Activated CD8-positive, alpha-beta T cell treated with anti-CD3 and anti-CD28 coated beads, Interleukin-2, amount 10 ng/mL, durations not matched to agents 7 days and 5 days (primary cell): ENCODE measurements at regions of chr20 and their contacts with region 1.

Region 1: GRCh38 chr20:45095753-45096371 is 5.1 kb downstream of the KCNS1 start:
- DNase-seq: peak; percentile 75
- ATAC-seq: peak; percentile 52
- H3K4me3 Mint-ChIP-seq: no peak overlapping the region
- H3K27ac Mint-ChIP-seq: no peak overlapping the region
- H3K4me1 Mint-ChIP-seq: peaks cover 13% of the 10 kb centered on the region
- H3K27me3 Mint-ChIP-seq: peaks cover 34% of the 10 kb centered on the region

Region 2: DNA sequence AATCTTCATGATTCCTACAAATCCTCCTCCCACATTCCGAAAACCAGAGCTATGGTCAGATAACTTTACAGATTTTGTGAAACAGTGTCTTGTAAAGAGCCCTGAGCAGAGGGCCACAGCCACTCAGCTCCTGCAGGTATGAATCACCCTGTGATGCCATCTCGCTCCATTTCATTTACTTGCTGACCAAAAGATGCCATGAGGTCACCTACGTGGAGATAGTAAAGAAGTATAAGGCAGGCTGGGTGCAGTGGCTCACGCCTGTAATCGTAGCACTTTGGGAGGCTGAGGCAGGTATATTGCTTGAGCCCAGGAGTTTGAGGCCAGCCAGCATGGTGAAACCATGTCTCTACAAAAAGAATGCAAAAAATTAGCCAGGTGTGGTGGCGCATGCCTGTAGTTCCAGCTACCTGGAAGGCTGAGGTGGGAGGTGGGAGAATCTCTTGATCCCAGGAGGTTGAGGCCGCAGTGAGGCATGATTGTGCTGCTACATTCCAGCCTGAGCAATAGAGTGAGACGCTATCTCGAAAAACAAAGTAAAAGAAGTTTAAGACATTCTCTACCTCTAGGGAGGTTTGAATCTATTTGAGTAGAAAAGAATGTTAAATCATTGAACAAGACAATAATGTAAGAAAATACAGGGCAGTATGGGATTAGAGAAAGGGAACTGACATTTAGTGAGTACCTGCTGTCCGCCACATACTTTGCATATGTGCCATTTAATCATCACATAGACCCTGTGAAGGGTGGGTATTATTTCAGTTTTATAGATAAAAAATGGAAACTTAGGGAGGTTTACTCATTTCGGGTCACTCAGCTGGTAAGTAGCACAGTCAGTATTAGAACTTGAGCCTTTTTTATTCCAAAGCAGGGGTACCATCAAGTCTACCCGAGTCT is 98.4 kb before region 1 on chr20:
- CTCF ChIA-PET with region 1: interaction called, 12 read pairs
- POLR2A ChIA-PET with region 1: no interaction called
- DNase-seq: no peak
- ATAC-seq: no peak
- H3K4me3 Mint-ChIP-seq: no peak overlapping the region
- H3K27ac Mint-ChIP-seq: peak overlapping the region; percentile 53
- H3K4me1 Mint-ChIP-seq: peaks cover 28% of the 10 kb centered on the region
- H3K27me3 Mint-ChIP-seq: no peaks in the 10 kb centered on the region

Region 3: DNA sequence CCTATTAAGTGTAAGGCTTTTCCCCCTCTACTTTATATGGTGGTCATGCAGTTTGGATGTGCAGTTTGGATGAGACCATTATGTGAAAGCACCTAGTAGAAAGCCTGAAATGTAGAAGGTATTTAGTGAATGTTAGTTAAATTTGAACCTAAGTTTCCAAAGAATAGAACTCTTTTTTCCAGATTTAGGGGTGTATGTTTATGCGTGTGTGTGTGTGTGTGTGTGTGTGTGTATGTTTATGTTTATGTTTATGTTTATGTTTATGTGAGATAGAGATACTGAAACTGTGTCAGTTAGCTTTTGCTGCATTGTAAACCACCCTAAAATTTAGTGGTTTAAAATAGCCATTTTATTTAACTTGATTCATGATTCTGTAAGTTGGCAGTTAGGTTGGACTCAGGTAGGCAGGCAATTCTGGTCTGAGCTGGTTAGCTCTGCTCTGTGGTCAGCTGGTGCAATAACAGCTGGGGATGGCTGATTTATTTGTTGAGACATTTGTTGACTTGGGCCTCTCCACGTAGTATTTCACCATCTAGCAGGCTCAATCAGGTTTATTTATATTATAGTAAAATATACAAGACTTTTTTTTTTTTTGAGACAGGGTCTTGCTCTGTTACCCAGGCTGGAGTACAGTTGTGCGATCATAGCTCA is 75.5 kb before region 1 on chr20:
- CTCF ChIA-PET with region 1: interaction called, 13 read pairs
- POLR2A ChIA-PET with region 1: interaction called, 3 read pairs
- DNase-seq: no peak
- ATAC-seq: no peak
- H3K4me3 Mint-ChIP-seq: no peak overlapping the region
- H3K27ac Mint-ChIP-seq: peak overlapping the region; percentile 50
- H3K4me1 Mint-ChIP-seq: peaks cover 8% of the 10 kb centered on the region
- H3K27me3 Mint-ChIP-seq: no peaks in the 10 kb centered on the region

Region 4: DNA sequence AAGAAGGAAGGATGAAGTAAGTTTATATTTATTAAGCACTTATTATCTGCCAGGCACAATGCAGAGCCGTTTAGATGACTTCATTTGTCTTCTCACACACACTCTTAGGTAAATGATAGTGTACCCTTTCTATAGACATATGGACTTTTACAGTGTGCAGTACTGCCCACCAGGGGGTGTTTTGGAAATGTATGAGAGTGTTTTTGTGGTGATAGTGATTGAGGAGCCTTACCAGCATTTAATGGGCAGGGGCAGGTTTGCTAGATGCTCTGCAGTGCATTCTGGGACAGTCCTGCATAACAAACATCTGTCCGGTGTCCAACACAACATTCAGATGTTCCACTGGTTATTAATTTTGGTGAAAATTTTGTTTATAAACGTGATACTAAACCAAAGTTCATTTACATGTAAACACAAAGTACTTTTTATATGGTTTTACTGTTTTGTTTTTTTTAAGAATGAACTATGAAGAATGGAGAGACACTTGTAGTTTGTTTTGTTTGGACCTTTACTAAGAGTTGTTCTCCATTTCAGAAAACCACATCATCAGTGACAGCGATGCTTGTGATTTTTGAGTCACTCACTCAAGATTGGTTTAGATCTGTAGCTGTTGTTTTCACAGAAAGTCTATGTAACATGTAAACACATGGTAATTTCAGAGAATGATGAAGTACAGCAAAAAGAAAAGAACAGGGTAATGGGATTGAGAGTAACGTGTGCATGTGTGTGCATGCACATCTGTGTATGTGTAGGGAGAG is 14.8 kb before region 1 on chr20:
- CTCF ChIA-PET with region 1: interaction called, 27 read pairs
- POLR2A ChIA-PET with region 1: no interaction called
- DNase-seq: no peak
- ATAC-seq: no peak
- H3K4me3 Mint-ChIP-seq: no peak overlapping the region
- H3K27ac Mint-ChIP-seq: no peak overlapping the region
- H3K4me1 Mint-ChIP-seq: peaks cover 4% of the 10 kb centered on the region
- H3K27me3 Mint-ChIP-seq: no peaks in the 10 kb centered on the region

Region 5: GRCh38 chr20:45383131-45383530 is 287.3 kb after region 1 on chr20:
- CTCF ChIA-PET with region 1: no interaction called
- POLR2A ChIA-PET with region 1: no interaction called
- DNase-seq: no peak
- ATAC-seq: no peak
- H3K4me3 Mint-ChIP-seq: no peak overlapping the region
- H3K27ac Mint-ChIP-seq: no peak overlapping the region
- H3K4me1 Mint-ChIP-seq: no peaks in the 10 kb centered on the region
- H3K27me3 Mint-ChIP-seq: no peaks in the 10 kb centered on the region